Endothelial cell of umbilical vein (primary cell): ENCODE measurements at regions of chr20 and their contacts with region 1.

Region 1: GRCh38 chr20:47272893-47273590 is 83.5 kb downstream of the ZMYND8 start:
- DNase-seq: peak; percentile 80
- H3K4me3 ChIP-seq: no peak overlapping the region
- H3K27ac ChIP-seq: peak overlapping the region; percentile 87
- H3K4me1 ChIP-seq: peaks cover 39% of the 10 kb centered on the region
- H3K27me3 ChIP-seq: no peaks in the 10 kb centered on the region
- CTCF ChIP-seq: peak; percentile 60 to 67
- POLR2A ChIP-seq: no peak

Region 2: GRCh38 chr20:46438156-46438750 is 834.8 kb before region 1 on chr20:
- CTCF ChIA-PET with region 1: no interaction called
- POLR2A ChIA-PET with region 1: no interaction called
- dilution Hi-C with region 1: no loop called
- intact Hi-C with region 1: no loop called
- DNase-seq: peak; percentile 15
- H3K4me3 ChIP-seq: no peak overlapping the region
- H3K27ac ChIP-seq: no peak overlapping the region
- H3K4me1 ChIP-seq: no peaks in the 10 kb centered on the region
- H3K27me3 ChIP-seq: peaks cover 0 to 2% of the 10 kb centered on the region in 2 experiments
- CTCF ChIP-seq: peak in 1 of 2 donors; percentile 30
- POLR2A ChIP-seq: no peak

Region 3: GRCh38 chr20:47196091-47197081 is 76.7 kb before region 1 on chr20:
- CTCF ChIA-PET with region 1: interaction called, 10 read pairs
- POLR2A ChIA-PET with region 1: interaction called, 5 read pairs
- dilution Hi-C with region 1: no loop called
- intact Hi-C with region 1: loop called (anchors 1 kb)
- DNase-seq: peak; percentile 63
- H3K4me3 ChIP-seq: no peak overlapping the region
- H3K27ac ChIP-seq: no peak overlapping the region
- H3K4me1 ChIP-seq: peaks cover 3% of the 10 kb centered on the region
- H3K27me3 ChIP-seq: peaks cover 0 to 2% of the 10 kb centered on the region in 2 experiments
- CTCF ChIP-seq: peak; percentile 95 to 98
- POLR2A ChIP-seq: no peak

Region 4: GRCh38 chr20:47220161-47220582 is 52.9 kb before region 1 on chr20:
- CTCF ChIA-PET with region 1: interaction called, 4 read pairs
- POLR2A ChIA-PET with region 1: no interaction called
- dilution Hi-C with region 1: no loop called
- intact Hi-C with region 1: loop called (anchors 1 kb)
- DNase-seq: peak; percentile 32
- H3K4me3 ChIP-seq: no peak overlapping the region
- H3K27ac ChIP-seq: no peak overlapping the region
- H3K4me1 ChIP-seq: no peaks in the 10 kb centered on the region
- H3K27me3 ChIP-seq: no peaks in the 10 kb centered on the region
- CTCF ChIP-seq: peak; percentile 63 to 68
- POLR2A ChIP-seq: no peak

Region 5: GRCh38 chr20:47304287-47304686 is 31.2 kb after region 1 on chr20:
- CTCF ChIA-PET with region 1: interaction called, 23 read pairs
- POLR2A ChIA-PET with region 1: interaction called, 3 read pairs
- dilution Hi-C with region 1: no loop called
- intact Hi-C with region 1: no loop called
- DNase-seq: peak; percentile 57
- H3K4me3 ChIP-seq: no peak overlapping the region
- H3K27ac ChIP-seq: peak overlapping the region; percentile 19
- H3K4me1 ChIP-seq: peaks cover 20% of the 10 kb centered on the region
- H3K27me3 ChIP-seq: no peaks in the 10 kb centered on the region
- CTCF ChIP-seq: peak in 1 of 2 donors; percentile 5
- POLR2A ChIP-seq: no peak

Region 6: DNA sequence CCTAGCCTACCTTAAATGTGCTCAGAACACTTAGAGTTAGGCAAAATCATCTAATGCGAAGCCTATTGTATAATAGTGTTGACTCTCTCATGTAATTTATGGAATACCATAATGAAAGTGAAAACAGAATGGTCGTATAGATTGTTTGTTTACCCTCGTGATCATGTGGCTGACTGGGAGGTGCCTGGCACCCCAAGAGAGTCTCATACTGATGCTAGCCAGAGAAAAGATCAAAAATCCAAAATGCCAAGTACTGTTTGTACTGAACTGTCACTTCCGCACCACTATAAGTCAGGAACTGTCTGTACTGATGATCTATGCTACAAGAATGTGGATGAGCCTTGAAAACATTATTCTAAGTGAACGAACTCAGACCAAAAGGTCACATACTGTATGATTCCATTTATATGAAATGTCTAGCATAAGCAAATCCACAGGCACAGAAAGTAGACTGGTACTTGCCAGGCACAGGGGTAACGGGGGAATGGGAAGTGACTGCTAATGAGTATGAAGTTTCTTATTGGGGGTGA is 61.0 kb after region 1 on chr20:
- CTCF ChIA-PET with region 1: interaction called, 10 read pairs
- POLR2A ChIA-PET with region 1: no interaction called
- dilution Hi-C with region 1: loop called (anchors 10 kb)
- intact Hi-C with region 1: loop called (anchors 1 kb)
- DNase-seq: peak; percentile 96
- H3K4me3 ChIP-seq: peak overlapping the region in 1 of 3 experiments; percentile 58
- H3K27ac ChIP-seq: peak overlapping the region; percentile 56
- H3K4me1 ChIP-seq: peaks cover 56% of the 10 kb centered on the region
- H3K27me3 ChIP-seq: no peaks in the 10 kb centered on the region
- CTCF ChIP-seq: no peak
- POLR2A ChIP-seq: peak; percentile 87

Region 7: DNA sequence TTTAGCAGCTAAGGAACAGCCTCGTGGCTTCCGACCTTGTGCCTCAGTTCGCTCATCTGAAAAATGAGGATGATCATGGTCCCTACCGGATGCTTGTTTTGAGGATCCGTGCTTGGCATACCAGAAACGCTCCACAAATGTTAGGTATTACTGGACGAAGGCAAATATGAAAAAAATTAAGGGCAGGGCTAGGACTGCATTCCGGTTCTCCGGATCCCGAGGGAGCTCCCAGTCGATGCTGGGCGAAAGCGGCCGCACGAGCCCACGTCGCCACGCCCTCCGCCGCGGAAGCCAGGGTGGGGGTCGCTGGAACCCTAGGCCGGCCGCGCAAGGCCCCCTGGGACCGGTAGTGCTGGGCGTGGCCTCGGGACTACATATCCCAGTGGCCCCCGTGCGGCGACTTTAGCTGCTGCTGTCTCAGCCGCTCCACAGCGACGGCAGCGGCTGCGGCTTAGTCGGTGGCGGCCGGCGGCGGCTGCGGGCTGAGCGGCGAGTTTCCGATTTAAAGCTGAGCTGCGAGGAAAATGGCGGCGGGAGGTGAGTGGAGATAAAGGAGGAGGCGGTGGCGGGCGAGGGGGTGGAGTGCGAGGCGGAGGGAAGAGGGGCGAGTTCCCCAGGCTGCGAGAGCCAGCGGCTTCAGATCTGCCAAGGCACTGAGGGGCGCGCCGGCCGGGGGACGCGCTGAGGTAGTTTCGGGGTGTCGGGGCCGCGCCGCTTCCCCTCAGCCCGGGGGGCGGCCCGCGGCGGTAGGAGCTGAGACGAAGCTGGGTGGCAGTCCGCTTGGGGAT is 228.6 kb after region 1 on chr20 and contains the start of gene NCOA3:
- CTCF ChIA-PET with region 1: interaction called, 3 read pairs
- POLR2A ChIA-PET with region 1: no interaction called
- dilution Hi-C with region 1: no loop called
- intact Hi-C with region 1: loop called (anchors 2 kb)
- DNase-seq: peak; percentile 92
- H3K4me3 ChIP-seq: peak within 1 kb of the TSS; percentile 80 to 94 (median 93)
- H3K27ac ChIP-seq: peak within 1 kb of the TSS; percentile 71
- H3K4me1 ChIP-seq: peaks cover 19% of the 10 kb centered on the region
- H3K27me3 ChIP-seq: no peaks in the 10 kb centered on the region
- CTCF ChIP-seq: peak; percentile 17 to 66
- POLR2A ChIP-seq: peak; percentile 96
- total RNA-seq, gene NCOA3: 26.7 and 35.6 TPM in 2 replicates

Region 8: DNA sequence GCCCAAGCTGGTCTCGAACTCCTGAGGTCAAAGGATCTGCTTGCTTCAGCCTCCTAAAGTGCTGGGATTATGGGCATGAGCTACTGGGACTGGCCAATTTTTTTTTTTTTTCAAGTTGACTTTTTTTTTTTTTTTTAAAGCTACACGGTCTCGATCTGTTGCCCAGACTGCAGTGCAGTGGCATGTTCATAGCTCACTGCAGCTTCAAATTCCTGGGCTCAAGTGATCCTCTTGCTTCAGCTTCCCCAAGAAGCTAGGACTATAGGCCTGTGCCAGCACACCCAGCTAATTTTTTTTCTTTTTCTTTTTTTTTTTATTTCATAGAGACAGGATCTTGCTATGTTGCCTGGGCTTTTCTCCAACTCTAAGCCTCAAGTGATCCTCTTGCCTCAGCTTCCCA is 288.1 kb after region 1 on chr20:
- CTCF ChIA-PET with region 1: no interaction called
- POLR2A ChIA-PET with region 1: no interaction called
- dilution Hi-C with region 1: no loop called
- intact Hi-C with region 1: no loop called
- DNase-seq: no peak
- H3K4me3 ChIP-seq: no peak overlapping the region
- H3K27ac ChIP-seq: no peak overlapping the region
- H3K4me1 ChIP-seq: no peaks in the 10 kb centered on the region
- H3K27me3 ChIP-seq: no peaks in the 10 kb centered on the region
- CTCF ChIP-seq: no peak
- POLR2A ChIP-seq: no peak